BJ (cell line): ENCODE measurements at regions of chr6 and their contacts with region 1.

Region 1: DNA sequence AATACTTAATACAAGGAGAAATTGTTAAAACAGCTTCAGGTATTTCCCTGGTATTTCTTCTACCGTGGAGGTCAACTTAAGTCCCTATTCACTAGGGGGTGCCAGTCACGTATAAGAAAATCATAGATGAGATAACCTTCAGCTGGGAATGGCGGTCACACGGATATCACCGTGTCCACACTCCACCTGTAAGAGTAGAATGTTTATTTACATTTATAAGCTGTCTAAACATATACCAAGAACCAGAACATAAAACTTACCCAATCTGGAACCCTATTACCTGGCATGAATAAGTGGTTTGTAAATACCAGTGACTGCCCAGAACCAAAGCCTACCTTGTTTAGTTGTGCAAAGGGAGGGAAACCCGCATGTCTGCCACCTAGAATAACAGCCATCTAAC is 1.9 kb upstream of the ELOVL4 start:
- DNase-seq: no peak
- H3K4me3 ChIP-seq: no peak overlapping the region
- H3K27me3 ChIP-seq: no peaks in the 10 kb centered on the region; the same call in none of the 2 replicates
- CTCF ChIP-seq: peak; percentile 65

Region 2: GRCh38 chr6:80094017-80094416 is 144.8 kb after region 1 on chr6:
- CTCF ChIA-PET with region 1: interaction called, 12 read pairs
- POLR2A ChIA-PET with region 1: no interaction called
- DNase-seq: no peak
- H3K4me3 ChIP-seq: no peak overlapping the region
- H3K27me3 ChIP-seq: no peaks in the 10 kb centered on the region; the same call in 1 of the 2 replicates
- CTCF ChIP-seq: peak; percentile 44